ENCODE measurements at regions of chr6 and their contacts with region 1.

Region 1: GRCh38 chr6:32127717-32128592 is at the start of gene ATF6B:
- DNase-seq: peak; percentile 99
- H3K4me3 ChIP-seq: peak within 1 kb of the TSS; percentile 75
- CTCF ChIP-seq: no peak

Region 2: DNA sequence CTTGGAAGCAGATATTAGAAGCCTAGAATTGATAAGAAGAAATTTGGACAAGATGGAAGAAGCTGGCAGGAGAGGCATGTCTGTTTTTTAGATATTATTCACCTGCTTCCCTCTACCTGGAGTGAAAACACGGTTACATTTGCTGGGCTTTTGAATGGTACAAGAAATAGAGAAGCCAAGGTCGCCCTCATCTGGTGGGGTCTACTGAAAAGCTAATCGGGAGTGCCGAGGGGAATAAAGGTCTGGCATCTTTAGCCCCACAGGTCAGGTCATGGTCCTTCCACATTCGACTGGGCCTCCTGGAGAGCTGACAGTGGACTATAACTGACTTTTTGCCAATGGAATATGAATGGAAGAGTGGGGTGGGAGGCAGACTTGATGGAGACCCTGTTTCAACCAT is 205.0 kb before region 1 on chr6:
- in situ Hi-C with region 1: no loop called
- DNase-seq: no peak
- H3K4me3 ChIP-seq: no peak overlapping the region
- CTCF ChIP-seq: no peak

Region 3: DNA sequence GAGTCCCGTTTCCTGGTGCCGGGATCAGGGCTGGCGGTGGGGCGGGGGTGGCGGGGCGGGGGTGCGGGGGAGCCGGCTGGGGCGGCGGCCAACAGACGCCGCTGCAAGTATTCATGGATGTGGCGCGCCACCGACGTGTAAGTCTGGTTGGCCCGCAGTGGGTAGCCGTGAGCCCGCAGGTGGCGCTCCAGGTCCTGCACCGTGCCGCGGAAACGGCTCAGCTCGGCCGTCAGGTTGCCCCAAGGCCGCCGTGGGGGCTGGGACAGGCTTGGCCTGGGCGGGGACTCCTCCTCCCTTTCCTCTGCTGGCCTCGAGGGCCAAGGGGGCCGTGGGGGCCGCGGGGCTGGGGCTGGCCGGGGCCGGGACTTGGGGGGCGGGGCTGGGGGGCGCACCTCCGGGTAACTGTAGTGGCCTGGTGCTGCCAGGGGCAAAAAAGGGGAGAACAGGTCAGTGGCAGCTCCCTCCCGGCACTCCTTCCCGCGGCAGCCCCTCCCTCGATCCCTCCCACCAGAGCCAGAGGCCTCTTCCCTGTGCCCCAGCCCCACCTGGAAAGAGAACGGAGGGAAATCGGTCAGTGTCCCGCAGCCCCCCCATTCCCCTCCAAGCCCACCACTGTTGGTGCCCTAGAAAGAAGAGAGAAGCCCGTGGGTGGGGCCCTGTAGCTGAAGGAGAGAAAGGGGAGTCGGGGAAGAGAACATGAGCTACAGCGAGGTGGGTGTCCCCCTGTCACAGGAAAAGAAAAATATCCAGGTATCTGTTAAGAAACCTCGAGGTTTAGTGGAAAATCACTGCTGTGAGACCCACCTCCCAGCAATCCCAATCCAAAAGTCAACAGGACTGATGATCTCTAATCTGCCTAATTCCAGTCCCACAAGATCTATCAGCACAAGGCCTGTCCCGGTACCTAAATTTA is 40.1 kb before region 1 on chr6:
- in situ Hi-C with region 1: no loop called
- DNase-seq: no peak
- H3K4me3 ChIP-seq: no peak overlapping the region
- CTCF ChIP-seq: peak; percentile 24

Region 4: GRCh38 chr6:32188381-32189004 is 60.5 kb after region 1 on chr6:
- in situ Hi-C with region 1: loop called (anchors 10 kb)
- DNase-seq: no peak
- H3K4me3 ChIP-seq: peak overlapping the region; percentile 74
- CTCF ChIP-seq: no peak